ENCODE measurements at regions of chr12 and their contacts with region 1.

Region 1: DNA sequence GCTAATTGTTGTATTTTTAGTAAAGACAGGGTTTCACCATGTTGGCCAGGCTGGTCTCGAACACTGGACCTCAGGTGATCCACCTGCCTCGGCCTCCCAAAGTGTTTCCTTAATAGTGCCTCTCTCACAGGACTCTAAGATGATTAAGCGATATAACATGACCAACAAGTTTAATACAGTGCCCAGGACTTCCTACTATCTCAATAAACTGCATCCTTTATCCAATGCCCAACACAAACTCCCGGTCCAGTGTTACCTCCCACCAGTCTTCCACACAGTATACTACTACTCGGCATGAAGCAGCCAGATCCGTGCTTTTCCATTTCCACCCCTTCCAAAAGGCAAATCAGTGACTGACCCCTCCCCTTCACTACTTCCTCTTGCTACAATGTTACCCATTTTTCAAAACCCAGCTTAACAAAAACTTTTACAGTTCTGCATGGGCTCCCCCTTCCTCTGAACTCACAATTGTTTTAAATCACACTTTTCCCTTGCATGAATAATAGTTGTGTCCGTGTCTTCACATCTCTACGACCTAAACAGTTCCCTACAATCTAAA is 900 bp downstream of the NOP2 start:
- DNase-seq: no peak

Region 2: DNA sequence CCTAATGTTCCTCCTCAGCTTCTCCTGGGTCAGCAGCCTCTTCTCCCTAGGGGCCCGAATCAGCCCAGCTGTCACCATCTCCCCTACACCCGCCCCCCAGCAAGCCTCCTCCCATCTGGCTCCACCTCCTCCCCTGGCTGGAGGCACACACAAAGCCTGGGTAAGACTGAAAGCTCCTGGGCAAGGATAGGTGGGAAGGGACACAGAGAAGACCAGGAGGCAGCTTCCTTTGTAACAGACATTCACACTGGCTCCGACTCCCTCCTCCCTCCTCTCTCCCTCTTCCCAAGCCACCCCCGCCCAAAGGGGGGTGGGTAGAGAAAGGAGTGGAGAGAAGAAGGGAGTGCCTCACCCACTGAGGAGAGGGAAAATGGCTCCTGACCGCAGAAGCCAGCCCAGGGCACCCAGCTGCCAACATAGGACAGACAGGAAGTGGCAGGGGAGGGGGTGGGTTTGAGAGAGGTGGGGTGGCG is 35.9 kb after region 1 on chr12:
- intact Hi-C with region 1: loop called (anchors 5 kb)
- DNase-seq: peak in 30 of 42 donors; percentile 13 to 76 (median 49)

Region 3: DNA sequence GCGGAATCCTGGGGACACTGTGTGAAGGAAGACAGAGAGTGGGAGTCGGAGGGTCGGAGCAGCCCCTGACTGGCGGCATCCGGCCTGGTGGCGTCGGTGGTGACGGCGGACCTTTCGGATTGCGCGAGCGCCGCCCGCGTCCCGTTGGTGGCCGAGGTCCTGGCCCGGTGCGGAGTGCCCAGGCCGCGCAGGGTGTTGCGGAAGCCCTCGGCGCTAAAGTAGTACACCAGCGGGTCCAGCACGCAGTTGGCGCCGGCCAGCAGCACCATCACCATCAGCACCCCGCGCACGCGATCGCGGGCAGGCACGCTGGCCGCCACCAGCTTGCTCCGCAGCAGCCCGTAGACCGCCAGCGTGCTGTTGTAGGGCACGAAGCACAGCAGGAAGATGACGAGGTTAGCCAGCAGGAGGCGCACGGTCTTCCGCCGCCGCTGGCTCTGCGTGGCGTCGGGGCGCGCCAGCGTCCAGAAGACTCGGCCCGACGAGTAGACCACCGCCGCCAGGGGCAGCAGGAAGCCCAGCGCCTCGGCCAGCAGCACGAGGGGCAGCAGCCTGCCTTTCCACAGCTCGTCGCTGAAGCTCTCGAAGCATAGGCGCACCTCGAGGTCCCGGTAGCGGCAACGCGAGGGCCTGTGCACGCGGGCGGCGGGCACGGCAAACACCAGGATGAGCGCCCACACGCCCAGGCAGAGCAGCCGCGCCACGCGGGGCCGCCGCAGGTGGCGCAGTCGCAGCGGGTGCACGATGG is 53.1 kb after region 1 on chr12:
- intact Hi-C with region 1: no loop called
- DNase-seq: peak in 9 of 42 donors; percentile 20 to 61 (median 46)

Region 4: GRCh38 chr12:7638760-7639555 is 1071.8 kb after region 1 on chr12:
- intact Hi-C with region 1: no loop called
- DNase-seq: peak; percentile 47 to 94 (median 81)